ENCODE measurements at regions of chr9 and their contacts with region 1.

Region 1: GRCh38 chr9:32426278-32426939 is 42.0 kb downstream of the ACO1 start:
- DNase-seq: peak in 4 of 6 donors; percentile 57 to 85 (median 69)
- ATAC-seq: peak; percentile 90 to 94 (median 92)
- H3K4me3 ChIP-seq: no peak overlapping the region
- H3K27ac ChIP-seq: peak overlapping the region; percentile 29 to 77 (median 52)
- H3K4me1 ChIP-seq: peaks cover 9 to 21% (median 16%) of the 10 kb centered on the region in 3 donors
- H3K27me3 ChIP-seq: no peaks in the 10 kb centered on the region
- CTCF ChIP-seq: no peak

Region 2: DNA sequence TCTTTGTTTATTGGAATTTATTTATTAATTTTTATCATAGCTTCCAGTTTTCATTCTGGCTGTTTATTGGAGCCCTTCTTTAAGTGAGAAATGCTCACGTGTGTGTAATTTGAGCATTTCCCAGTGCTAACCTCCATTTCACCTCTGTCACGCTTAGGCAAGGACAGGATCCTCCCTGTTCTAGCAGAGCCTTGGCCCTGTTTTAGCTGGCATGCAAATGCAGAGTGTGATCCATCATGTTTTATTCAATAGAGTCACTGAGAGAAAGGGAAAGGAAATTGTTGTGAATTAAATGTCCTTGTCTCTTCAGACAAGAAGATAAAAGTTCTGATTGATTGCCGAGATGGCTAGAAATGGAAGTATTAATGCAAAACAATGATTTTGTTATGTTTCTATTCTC is 179.2 kb before region 1 on chr9:
- intact Hi-C with region 1: no loop called
- DNase-seq: no peak
- ATAC-seq: no peak
- H3K4me3 ChIP-seq: no peak overlapping the region
- H3K27ac ChIP-seq: no peak overlapping the region
- H3K4me1 ChIP-seq: no peaks in the 10 kb centered on the region
- H3K27me3 ChIP-seq: no peaks in the 10 kb centered on the region
- CTCF ChIP-seq: no peak

Region 3: GRCh38 chr9:32394381-32395049 is 31.9 kb before region 1 on chr9:
- intact Hi-C with region 1: loop called in 1 of 3 experiments (anchors 5 kb)
- DNase-seq: peak in 4 of 6 donors; percentile 44 to 69 (median 63)
- ATAC-seq: peak; percentile 88 to 92 (median 88)
- H3K4me3 ChIP-seq: no peak overlapping the region
- H3K27ac ChIP-seq: peak overlapping the region in 3 of 4 donors; percentile 6 to 52 (median 30)
- H3K4me1 ChIP-seq: peaks cover 8 to 15% (median 12%) of the 10 kb centered on the region in 3 donors
- H3K27me3 ChIP-seq: no peaks in the 10 kb centered on the region
- CTCF ChIP-seq: no peak